ENCODE measurements at regions of chr21 and their contacts with region 1.

Region 1: GRCh38 chr21:32735524-32735923 is 7.7 kb upstream of the SYNJ1 start:
- DNase-seq: peak; percentile 36
- H3K4me3 Mint-ChIP-seq: no peak overlapping the region
- H3K27ac Mint-ChIP-seq: peak overlapping the region; percentile 46
- H3K4me1 Mint-ChIP-seq: peaks cover 48% of the 10 kb centered on the region
- H3K27me3 Mint-ChIP-seq: no peaks in the 10 kb centered on the region

Region 2: DNA sequence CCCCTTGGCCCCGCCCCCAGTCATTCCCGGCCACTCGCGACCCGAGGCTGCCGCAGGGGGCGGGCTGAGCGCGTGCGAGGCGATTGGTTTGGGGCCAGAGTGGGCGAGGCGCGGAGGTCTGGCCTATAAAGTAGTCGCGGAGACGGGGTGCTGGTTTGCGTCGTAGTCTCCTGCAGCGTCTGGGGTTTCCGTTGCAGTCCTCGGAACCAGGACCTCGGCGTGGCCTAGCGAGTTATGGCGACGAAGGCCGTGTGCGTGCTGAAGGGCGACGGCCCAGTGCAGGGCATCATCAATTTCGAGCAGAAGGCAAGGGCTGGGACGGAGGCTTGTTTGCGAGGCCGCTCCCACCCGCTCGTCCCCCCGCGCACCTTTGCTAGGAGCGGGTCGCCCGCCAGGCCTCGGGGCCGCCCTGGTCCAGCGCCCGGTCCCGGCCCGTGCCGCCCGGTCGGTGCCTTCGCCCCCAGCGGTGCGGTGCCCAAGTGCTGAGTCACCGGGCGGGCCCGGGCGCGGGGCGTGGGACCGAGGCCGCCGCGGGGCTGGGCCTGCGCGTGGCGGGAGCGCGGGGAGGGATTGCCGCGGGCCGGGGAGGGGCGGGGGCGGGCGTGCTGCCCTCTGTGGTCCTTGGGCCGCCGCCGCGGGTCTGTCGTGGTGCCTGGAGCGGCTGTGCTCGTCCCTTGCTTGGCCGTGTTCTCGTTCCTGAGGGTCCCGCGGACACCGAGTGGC is 1075.8 kb before region 1 on chr21 and contains the start of gene SOD1:
- CTCF ChIA-PET with region 1: no interaction called
- POLR2A ChIA-PET with region 1: no interaction called
- intact Hi-C with region 1: loop called (anchors 5 kb)
- DNase-seq: peak; percentile 96
- H3K4me3 Mint-ChIP-seq: peak within 1 kb of the TSS; percentile 98
- H3K27ac Mint-ChIP-seq: peak within 1 kb of the TSS; percentile 99
- H3K4me1 Mint-ChIP-seq: peaks cover 65% of the 10 kb centered on the region
- H3K27me3 Mint-ChIP-seq: no peaks in the 10 kb centered on the region
- total RNA-seq, gene SOD1: 280 to 286 TPM

Region 3: GRCh38 chr21:31991356-31992331 is 743.9 kb before region 1 on chr21:
- CTCF ChIA-PET with region 1: no interaction called
- POLR2A ChIA-PET with region 1: no interaction called
- intact Hi-C with region 1: no loop called
- DNase-seq: no peak
- H3K4me3 Mint-ChIP-seq: no peak overlapping the region
- H3K27ac Mint-ChIP-seq: no peak overlapping the region
- H3K4me1 Mint-ChIP-seq: no peaks in the 10 kb centered on the region
- H3K27me3 Mint-ChIP-seq: peaks cover 17% of the 10 kb centered on the region

Region 4: GRCh38 chr21:32749662-32750061 is 14.1 kb after region 1 on chr21:
- CTCF ChIA-PET with region 1: interaction called, 5 read pairs
- POLR2A ChIA-PET with region 1: interaction called, 6 read pairs
- intact Hi-C with region 1: loop called (anchors 2 kb)
- DNase-seq: no peak
- H3K4me3 Mint-ChIP-seq: no peak overlapping the region
- H3K27ac Mint-ChIP-seq: peak overlapping the region; percentile 30
- H3K4me1 Mint-ChIP-seq: peaks cover 40% of the 10 kb centered on the region
- H3K27me3 Mint-ChIP-seq: no peaks in the 10 kb centered on the region